Heart left ventricle (tissue), 16 donors: ENCODE measurements at regions of chr5 and their contacts with region 1.

Region 1: DNA sequence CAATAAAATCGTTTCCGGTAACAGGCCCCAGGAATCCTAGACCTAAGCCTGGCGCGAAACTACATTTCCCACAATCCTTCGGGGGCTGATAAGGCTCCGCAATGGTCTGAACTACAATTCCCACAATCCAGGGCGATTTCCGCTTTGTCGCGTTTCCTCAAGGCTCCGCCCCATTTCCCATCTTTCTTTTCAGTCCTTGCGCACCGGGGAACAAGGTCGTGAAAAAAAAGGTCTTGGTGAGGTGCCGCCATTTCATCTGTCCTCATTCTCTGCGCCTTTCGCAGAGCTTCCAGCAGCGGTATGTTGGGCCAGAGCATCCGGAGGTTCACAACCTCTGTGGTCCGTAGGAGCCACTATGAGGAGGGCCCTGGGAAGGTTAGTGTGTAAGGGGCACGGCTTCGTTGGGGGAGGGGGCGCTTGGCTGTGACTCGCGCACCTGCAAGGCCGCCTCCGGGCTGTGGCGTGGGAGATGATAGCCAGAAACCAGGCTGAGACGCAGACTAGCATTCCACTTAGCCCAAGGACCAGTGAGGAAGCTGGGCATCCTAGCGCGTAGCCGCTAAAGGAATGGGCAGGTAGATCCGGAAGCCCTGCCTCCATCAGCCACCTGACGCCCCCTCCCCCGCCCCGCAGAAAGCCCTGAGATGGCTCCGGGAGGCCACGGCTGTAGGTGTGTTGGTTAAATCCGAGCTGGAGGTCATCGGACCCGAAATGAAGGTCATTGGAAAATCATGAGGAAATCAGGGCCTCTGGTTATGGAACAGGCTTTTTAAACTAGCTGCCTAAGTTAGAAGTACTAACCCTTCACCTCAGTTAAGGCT is at the start of gene COX7C:
- DNase-seq: peak; percentile 87 to 94 (median 93)
- ATAC-seq: peak; percentile 98 to 99 (median 99)
- H3K4me3 ChIP-seq: peak within 1 kb of the TSS; percentile 74 to 98 (median 92)
- H3K27ac ChIP-seq: peak within 1 kb of the TSS; percentile 92 to 98 (median 96)
- H3K4me1 ChIP-seq: peaks cover 0 to 14% (median 11%) of the 10 kb centered on the region in 12 donors
- H3K27me3 ChIP-seq: peaks cover 0 to 3% (median 0%) of the 10 kb centered on the region in 9 donors
- CTCF ChIP-seq: no peak
- POLR2A ChIP-seq: peak; percentile 19 to 85
- total RNA-seq, gene COX7C: 1,038 to 2,399 (median 1,758) TPM

Region 2: DNA sequence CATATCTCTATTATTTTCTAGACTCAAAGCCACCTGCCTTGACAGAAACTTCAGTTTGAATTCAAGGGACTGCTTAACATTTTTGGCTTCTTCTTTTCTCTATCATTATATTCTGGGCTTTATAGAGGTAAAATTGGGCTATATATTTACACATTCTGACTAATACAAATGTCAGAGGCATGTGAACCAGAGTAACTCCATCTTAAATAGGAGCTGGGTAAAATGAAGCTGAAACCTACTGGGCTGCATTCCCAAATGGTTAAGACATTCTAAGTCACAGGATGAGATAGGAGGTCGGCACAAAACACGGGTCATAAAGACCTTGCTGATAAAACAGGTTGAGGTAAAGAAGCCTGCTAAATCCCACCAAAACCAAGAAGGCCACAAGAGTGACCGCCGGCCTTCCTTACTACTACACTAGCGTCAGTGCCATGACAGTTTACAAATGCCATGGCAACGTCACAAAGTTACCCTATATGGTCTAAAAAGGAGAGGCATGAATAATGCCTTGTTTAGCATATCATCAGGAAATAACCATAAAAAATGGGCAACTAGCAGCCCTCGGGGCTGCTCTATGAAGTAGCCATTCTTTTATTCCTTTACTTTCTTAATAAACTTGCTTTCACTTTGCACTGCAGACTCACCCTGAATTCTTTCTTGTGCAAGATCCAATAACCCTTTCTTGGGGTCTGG is 45.0 kb before region 1 on chr5:
- intact Hi-C with region 1: no loop called
- DNase-seq: no peak
- ATAC-seq: no peak
- H3K4me3 ChIP-seq: no peak overlapping the region
- H3K27ac ChIP-seq: no peak overlapping the region
- H3K4me1 ChIP-seq: no peaks in the 10 kb centered on the region
- H3K27me3 ChIP-seq: no peaks in the 10 kb centered on the region
- CTCF ChIP-seq: no peak
- POLR2A ChIP-seq: no peak

Region 3: DNA sequence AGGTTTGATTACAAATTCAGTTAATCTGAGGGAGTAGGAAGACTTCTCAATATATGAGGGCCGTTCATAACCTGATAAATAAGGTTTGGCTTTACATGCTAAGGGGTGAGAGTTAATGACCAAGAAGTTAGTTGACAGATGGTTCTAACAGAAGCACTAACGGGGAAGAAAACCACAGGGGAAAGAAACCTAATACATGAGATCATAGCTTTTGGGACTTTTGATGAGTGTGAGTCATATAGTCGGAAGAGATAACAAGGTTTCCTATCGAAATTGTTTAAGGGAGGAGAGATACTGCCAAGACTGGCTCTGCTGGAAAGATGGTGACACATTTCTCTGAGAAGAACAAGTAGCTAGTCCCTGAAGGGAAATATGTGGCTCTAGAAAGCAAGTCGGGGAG is 139.9 kb after region 1 on chr5:
- intact Hi-C with region 1: no loop called
- DNase-seq: no peak
- ATAC-seq: no peak
- H3K4me3 ChIP-seq: no peak overlapping the region
- H3K27ac ChIP-seq: no peak overlapping the region
- H3K4me1 ChIP-seq: no peaks in the 10 kb centered on the region
- H3K27me3 ChIP-seq: no peaks in the 10 kb centered on the region
- CTCF ChIP-seq: no peak
- POLR2A ChIP-seq: no peak

Region 4: DNA sequence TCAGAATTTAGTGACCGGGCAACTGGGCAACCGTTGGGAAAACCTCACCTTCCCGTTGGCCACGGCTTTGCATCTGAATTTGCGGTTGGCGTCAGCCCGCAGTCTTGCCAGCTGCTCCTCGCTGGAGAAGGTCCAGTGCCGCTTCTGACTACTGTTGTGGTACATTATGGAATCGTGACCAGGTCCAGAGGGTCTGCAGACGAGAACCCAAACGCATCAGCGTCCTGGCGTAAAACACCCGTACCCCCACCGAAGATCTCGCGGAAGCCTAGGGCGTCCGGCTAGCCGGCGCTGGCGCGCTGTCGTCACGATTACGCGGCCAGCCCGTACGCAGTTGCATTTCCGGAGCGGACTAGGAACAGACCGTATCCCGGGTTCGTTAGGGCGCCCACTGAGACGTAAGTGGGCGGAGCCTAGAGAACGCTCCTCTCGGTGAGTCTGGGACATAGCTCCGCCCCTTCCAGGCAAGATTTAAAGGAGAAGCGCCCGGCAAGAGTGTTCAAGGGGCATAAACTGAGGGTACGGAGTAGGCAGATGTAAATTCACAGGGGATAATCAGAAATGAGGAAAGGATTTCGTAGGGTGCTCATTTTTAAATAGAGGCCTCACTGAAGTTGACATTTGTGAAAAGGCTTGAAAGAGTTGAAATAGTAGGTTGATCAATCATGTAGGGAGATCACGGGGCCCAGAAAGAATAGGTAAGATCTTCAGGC is 794.8 kb after region 1 on chr5 and contains the start of gene CCNH:
- intact Hi-C with region 1: loop called in 1 of 10 experiments (anchors 5 kb)
- DNase-seq: peak; percentile 97 to 99 (median 99)
- ATAC-seq: peak; percentile 99 to 100 (median 100)
- H3K4me3 ChIP-seq: peak within 1 kb of the TSS; percentile 20 to 96 (median 87)
- H3K27ac ChIP-seq: peak within 1 kb of the TSS; percentile 80 to 99 (median 97)
- H3K4me1 ChIP-seq: peaks cover 0 to 34% (median 14%) of the 10 kb centered on the region in 12 donors
- H3K27me3 ChIP-seq: no peaks in the 10 kb centered on the region
- CTCF ChIP-seq: no peak
- POLR2A ChIP-seq: peak; percentile 79 to 92
- total RNA-seq, gene CCNH: 22.2 to 41.3 (median 23.3) TPM